K562 (cell line): ENCODE measurements at regions of chr5 and their contacts with region 1.

Region 1: GRCh38 chr5:116068028-116068632 is 16.7 kb upstream of the COMMD10 start:
- DNase-seq: peak; percentile 29 to 74 (median 36)
- ATAC-seq: peak; percentile 81
- H3K4me3 ChIP-seq: no peak overlapping the region
- H3K27ac ChIP-seq: no peak overlapping the region
- H3K4me1 ChIP-seq: no peaks in the 10 kb centered on the region
- H3K27me3 ChIP-seq: peaks cover 0 to 6% of the 10 kb centered on the region in 2 experiments; a peak in 2 of 5 replicates
- CTCF ChIP-seq: peak; percentile 45 to 83 (median 47); a peak in 4 of 6 replicates
- EP300 ChIP-seq: no peak
- POLR2A ChIP-seq: no peak
- RAD21 ChIP-seq: peak; percentile 85 to 86

Region 2: GRCh38 chr5:115098041-115098702 is 970.0 kb before region 1 on chr5:
- CTCF ChIA-PET with region 1: interaction called, 10 read pairs
- POLR2A ChIA-PET with region 1: no interaction called
- in situ Hi-C with region 1: no loop called
- intact Hi-C with region 1: no loop called
- DNase-seq: peak; percentile 26 to 56 (median 38)
- ATAC-seq: peak; percentile 95
- H3K4me3 ChIP-seq: no peak overlapping the region
- H3K27ac ChIP-seq: no peak overlapping the region
- H3K4me1 ChIP-seq: no peaks in the 10 kb centered on the region
- H3K27me3 ChIP-seq: no peaks in the 10 kb centered on the region; a peak in 1 of 5 replicates
- CTCF ChIP-seq: peak; percentile 62 to 73 (median 68)
- EP300 ChIP-seq: no peak
- POLR2A ChIP-seq: no peak
- RAD21 ChIP-seq: peak; percentile 60 to 78

Region 3: DNA sequence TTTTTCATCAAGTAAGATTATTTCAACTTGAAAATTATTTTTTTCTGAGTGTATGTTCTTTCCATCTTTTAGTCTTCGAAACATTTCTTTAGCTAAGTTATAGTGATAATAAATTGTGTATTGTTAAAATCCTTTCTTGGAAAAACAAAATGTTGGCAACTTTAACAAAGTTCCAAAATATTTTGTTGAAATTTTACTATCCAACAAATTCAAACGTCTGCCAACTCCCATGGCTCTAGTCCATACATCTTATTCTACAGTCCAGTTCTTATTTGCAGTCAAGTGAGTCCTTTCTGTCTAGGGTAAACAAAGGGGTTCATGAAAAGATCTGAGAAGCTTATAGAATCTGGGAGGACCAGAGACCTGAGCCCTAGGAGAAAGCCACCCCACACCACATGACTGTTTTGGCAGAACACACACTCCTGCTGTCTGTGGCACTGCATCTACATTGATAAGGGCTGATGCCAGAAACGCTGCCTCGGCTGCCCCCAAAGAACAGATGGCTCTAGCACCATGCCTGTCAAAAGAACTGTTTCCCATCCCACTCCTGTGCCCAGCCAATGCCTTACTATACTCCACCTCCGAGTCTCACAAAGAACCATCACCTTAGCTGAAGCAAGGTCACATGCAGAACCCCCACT is 571.1 kb before region 1 on chr5:
- CTCF ChIA-PET with region 1: no interaction called
- POLR2A ChIA-PET with region 1: no interaction called
- in situ Hi-C with region 1: no loop called
- intact Hi-C with region 1: no loop called
- DNase-seq: no peak
- ATAC-seq: no peak
- H3K4me3 ChIP-seq: no peak overlapping the region
- H3K27ac ChIP-seq: no peak overlapping the region
- H3K4me1 ChIP-seq: no peaks in the 10 kb centered on the region
- H3K27me3 ChIP-seq: peaks cover 0 to 5% of the 10 kb centered on the region in 2 experiments; a peak in 2 of 5 replicates
- CTCF ChIP-seq: no peak
- EP300 ChIP-seq: no peak
- POLR2A ChIP-seq: no peak
- RAD21 ChIP-seq: no peak

Region 4: GRCh38 chr5:115544436-115545350 is 523.4 kb before region 1 on chr5 and contains the start of gene FEM1C:
- CTCF ChIA-PET with region 1: interaction called, 3 read pairs
- POLR2A ChIA-PET with region 1: no interaction called
- in situ Hi-C with region 1: no loop called
- intact Hi-C with region 1: loop called (anchors 1 kb)
- DNase-seq: peak; percentile 95 to 96 (median 96)
- ATAC-seq: peak; percentile 97
- H3K4me3 ChIP-seq: peak within 1 kb of the TSS; percentile 84
- H3K27ac ChIP-seq: peak within 1 kb of the TSS; percentile 89
- H3K4me1 ChIP-seq: peaks cover 3 to 7% of the 10 kb centered on the region in 2 experiments; a peak in 2 of 5 replicates
- H3K27me3 ChIP-seq: no peaks in the 10 kb centered on the region
- CTCF ChIP-seq: no peak
- EP300 ChIP-seq: peak; percentile 32; the same call in 1 of the 2 replicates
- POLR2A ChIP-seq: peak; percentile 92
- RAD21 ChIP-seq: no peak
- polyA plus RNA-seq, gene FEM1C: 1.4 to 3.9 TPM

Region 5: GRCh38 chr5:115634343-115635132 is 433.6 kb before region 1 on chr5:
- CTCF ChIA-PET with region 1: interaction called, 3 read pairs
- POLR2A ChIA-PET with region 1: no interaction called
- in situ Hi-C with region 1: loop called (anchors 5 kb)
- intact Hi-C with region 1: loop called (anchors 2 kb)
- DNase-seq: peak; percentile 81 to 89 (median 84)
- ATAC-seq: peak; percentile 99
- H3K4me3 ChIP-seq: no peak overlapping the region
- H3K27ac ChIP-seq: peak overlapping the region; percentile 8; the same call in 1 of the 3 replicates
- H3K4me1 ChIP-seq: peaks cover 0 to 4% of the 10 kb centered on the region in 2 experiments; a peak in 1 of 5 replicates
- H3K27me3 ChIP-seq: peaks cover 0 to 2% of the 10 kb centered on the region in 2 experiments; a peak in 2 of 5 replicates
- CTCF ChIP-seq: peak; percentile 86 to 94 (median 89)
- EP300 ChIP-seq: no peak
- POLR2A ChIP-seq: no peak
- RAD21 ChIP-seq: peak; percentile 85 to 89

Region 6: GRCh38 chr5:115888027-115888426 is 180.1 kb before region 1 on chr5:
- CTCF ChIA-PET with region 1: no interaction called
- POLR2A ChIA-PET with region 1: no interaction called
- in situ Hi-C with region 1: no loop called
- intact Hi-C with region 1: loop called (anchors 5 kb)
- DNase-seq: no peak
- ATAC-seq: no peak
- H3K4me3 ChIP-seq: no peak overlapping the region
- H3K27ac ChIP-seq: no peak overlapping the region
- H3K4me1 ChIP-seq: no peaks in the 10 kb centered on the region
- H3K27me3 ChIP-seq: no peaks in the 10 kb centered on the region
- CTCF ChIP-seq: peak in 1 of 3 experiments; percentile 24; a peak in 1 of 6 replicates
- EP300 ChIP-seq: no peak
- POLR2A ChIP-seq: no peak
- RAD21 ChIP-seq: peak in 1 of 2 experiments; percentile 38; a peak in 2 of 4 replicates

Region 7: GRCh38 chr5:116115163-116115562 is 47.0 kb after region 1 on chr5:
- CTCF ChIA-PET with region 1: no interaction called
- POLR2A ChIA-PET with region 1: no interaction called
- in situ Hi-C with region 1: no loop called
- intact Hi-C with region 1: no loop called
- DNase-seq: no peak
- ATAC-seq: no peak
- H3K4me3 ChIP-seq: no peak overlapping the region
- H3K27ac ChIP-seq: no peak overlapping the region
- H3K4me1 ChIP-seq: no peaks in the 10 kb centered on the region
- H3K27me3 ChIP-seq: no peaks in the 10 kb centered on the region
- CTCF ChIP-seq: no peak
- EP300 ChIP-seq: no peak
- POLR2A ChIP-seq: no peak
- RAD21 ChIP-seq: no peak

Region 8: DNA sequence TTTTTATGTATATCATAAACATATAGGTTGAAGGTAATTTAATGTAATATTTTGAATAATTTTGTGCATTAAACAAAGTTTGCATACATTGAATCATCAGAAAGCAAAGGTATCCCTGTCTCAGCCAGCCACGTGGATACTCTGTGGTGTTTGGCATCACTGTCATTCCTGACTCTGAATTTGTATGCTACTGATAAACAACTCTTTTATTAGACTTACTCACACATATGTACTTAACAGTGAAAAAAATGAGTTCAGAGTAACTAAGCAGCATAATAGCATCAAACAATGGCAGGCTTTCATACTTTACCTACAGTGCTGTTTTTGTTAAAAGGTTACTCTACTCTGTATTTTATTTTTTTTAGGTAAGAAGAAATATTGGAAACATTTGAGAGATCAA is 188.6 kb after region 1 on chr5:
- CTCF ChIA-PET with region 1: no interaction called
- POLR2A ChIA-PET with region 1: no interaction called
- in situ Hi-C with region 1: no loop called
- intact Hi-C with region 1: no loop called
- DNase-seq: no peak
- ATAC-seq: no peak
- H3K4me3 ChIP-seq: no peak overlapping the region
- H3K27ac ChIP-seq: no peak overlapping the region
- H3K4me1 ChIP-seq: no peaks in the 10 kb centered on the region
- H3K27me3 ChIP-seq: no peaks in the 10 kb centered on the region
- CTCF ChIP-seq: no peak
- EP300 ChIP-seq: no peak
- POLR2A ChIP-seq: no peak
- RAD21 ChIP-seq: no peak

Region 9: DNA sequence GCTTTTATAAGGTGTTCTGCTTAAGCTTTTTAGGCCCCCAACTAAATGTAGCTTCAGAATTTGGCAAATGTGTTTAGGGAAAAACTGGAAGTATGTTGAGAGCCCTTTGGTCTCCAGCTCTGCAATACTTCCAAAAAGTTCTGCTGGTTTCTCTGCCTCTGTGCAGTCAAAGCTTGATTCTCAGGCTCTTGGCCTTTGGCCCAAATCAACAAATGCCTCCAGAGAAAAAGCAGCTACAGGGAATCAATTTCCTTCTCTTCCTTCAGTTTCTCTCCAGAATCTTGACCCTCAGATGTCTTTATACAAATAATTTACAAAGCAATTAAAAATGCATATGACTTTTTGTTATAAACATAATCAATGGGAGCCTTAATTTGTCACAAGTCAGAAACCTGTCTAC is 252.4 kb after region 1 on chr5:
- CTCF ChIA-PET with region 1: no interaction called
- POLR2A ChIA-PET with region 1: no interaction called
- in situ Hi-C with region 1: no loop called
- intact Hi-C with region 1: no loop called
- DNase-seq: no peak
- ATAC-seq: no peak
- H3K4me3 ChIP-seq: no peak overlapping the region
- H3K27ac ChIP-seq: no peak overlapping the region
- H3K4me1 ChIP-seq: no peaks in the 10 kb centered on the region
- H3K27me3 ChIP-seq: no peaks in the 10 kb centered on the region
- CTCF ChIP-seq: no peak
- EP300 ChIP-seq: no peak
- POLR2A ChIP-seq: no peak
- RAD21 ChIP-seq: no peak